ENCODE measurements at regions of chr1 and their contacts with region 1.

Region 1: GRCh38 chr1:34865981-34866761 is 6.6 kb upstream of the SMIM12 start:
- DNase-seq: peak; percentile 85
- H3K4me3 Mint-ChIP-seq: peak overlapping the region; percentile 80
- H3K27ac Mint-ChIP-seq: peak overlapping the region; percentile 86
- H3K4me1 Mint-ChIP-seq: peaks cover 36% of the 10 kb centered on the region
- H3K27me3 Mint-ChIP-seq: peaks cover 12% of the 10 kb centered on the region

Region 2: GRCh38 chr1:34763142-34763781 is 102.9 kb before region 1 on chr1:
- intact Hi-C with region 1: no loop called
- DNase-seq: no peak
- H3K4me3 Mint-ChIP-seq: no peak overlapping the region
- H3K27ac Mint-ChIP-seq: no peak overlapping the region
- H3K4me1 Mint-ChIP-seq: no peaks in the 10 kb centered on the region
- H3K27me3 Mint-ChIP-seq: peaks cover 3% of the 10 kb centered on the region

Region 3: GRCh38 chr1:34786521-34787325 is 79.4 kb before region 1 on chr1:
- intact Hi-C with region 1: loop called (anchors 1 kb)
- DNase-seq: peak; percentile 47
- H3K4me3 Mint-ChIP-seq: no peak overlapping the region
- H3K27ac Mint-ChIP-seq: no peak overlapping the region
- H3K4me1 Mint-ChIP-seq: peaks cover 25% of the 10 kb centered on the region
- H3K27me3 Mint-ChIP-seq: peaks cover 29% of the 10 kb centered on the region

Region 4: GRCh38 chr1:34844252-34844634 is 21.9 kb before region 1 on chr1:
- intact Hi-C with region 1: no loop called
- DNase-seq: no peak
- H3K4me3 Mint-ChIP-seq: no peak overlapping the region
- H3K27ac Mint-ChIP-seq: no peak overlapping the region
- H3K4me1 Mint-ChIP-seq: peaks cover 4% of the 10 kb centered on the region
- H3K27me3 Mint-ChIP-seq: no peaks in the 10 kb centered on the region

Region 5: DNA sequence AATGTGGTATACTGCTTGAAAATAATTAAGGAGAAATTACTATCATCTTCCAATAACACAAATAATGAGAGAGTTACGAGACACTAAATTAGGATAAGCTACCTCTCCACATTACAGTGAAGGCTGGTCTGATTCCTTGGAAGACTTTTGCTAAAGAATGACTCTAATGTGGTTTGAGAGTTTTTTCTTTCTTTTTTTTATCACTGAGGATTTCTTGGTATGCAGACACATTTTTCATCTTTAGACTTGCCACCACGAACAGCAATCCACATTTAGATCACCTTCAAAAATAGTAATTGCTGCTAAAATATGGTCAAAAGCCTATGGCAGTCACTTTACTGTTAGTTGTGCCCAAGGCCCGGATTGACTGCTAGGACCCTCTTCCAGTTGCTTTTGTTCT is 135.6 kb after region 1 on chr1:
- intact Hi-C with region 1: no loop called
- DNase-seq: no peak
- H3K4me3 Mint-ChIP-seq: no peak overlapping the region
- H3K27ac Mint-ChIP-seq: no peak overlapping the region
- H3K4me1 Mint-ChIP-seq: no peaks in the 10 kb centered on the region
- H3K27me3 Mint-ChIP-seq: no peaks in the 10 kb centered on the region

Region 6: GRCh38 chr1:35079003-35079930 is 213.1 kb after region 1 on chr1 and contains the start of gene ZMYM1:
- intact Hi-C with region 1: loop called (anchors 1 kb)
- DNase-seq: peak; percentile 82
- H3K4me3 Mint-ChIP-seq: peak within 1 kb of the TSS; percentile 98
- H3K27ac Mint-ChIP-seq: peak within 1 kb of the TSS; percentile 100
- H3K4me1 Mint-ChIP-seq: peaks cover 34% of the 10 kb centered on the region
- H3K27me3 Mint-ChIP-seq: no peaks in the 10 kb centered on the region
- total RNA-seq, gene ZMYM1: 3.3 and 5.3 TPM in 2 replicates

Region 7: GRCh38 chr1:36411674-36412520 is 1545.7 kb after region 1 on chr1:
- intact Hi-C with region 1: no loop called
- DNase-seq: peak; percentile 63
- H3K4me3 Mint-ChIP-seq: peak overlapping the region; percentile 43
- H3K27ac Mint-ChIP-seq: peak overlapping the region; percentile 84
- H3K4me1 Mint-ChIP-seq: peaks cover 19% of the 10 kb centered on the region
- H3K27me3 Mint-ChIP-seq: peaks cover 1% of the 10 kb centered on the region